SK-N-SH (cell line): ENCODE measurements at regions of chr17 and their contacts with region 1.

Region 1: GRCh38 chr17:55717898-55718735 is 4.5 kb downstream of the TMEM100 start:
- DNase-seq: peak; percentile 54
- H3K4me3 ChIP-seq: no peak overlapping the region; a peak in 1 of 4 replicates
- H3K27ac ChIP-seq: peak overlapping the region in 1 of 2 experiments; percentile 13; a peak in 1 of 4 replicates
- H3K4me1 ChIP-seq: peaks cover 2 to 8% of the 10 kb centered on the region in 2 experiments; a peak in 2 of 4 replicates
- H3K27me3 ChIP-seq: no peaks in the 10 kb centered on the region
- CTCF ChIP-seq: peak; percentile 99
- EP300 ChIP-seq: no peak
- RAD21 ChIP-seq: peak; percentile 97

Region 2: DNA sequence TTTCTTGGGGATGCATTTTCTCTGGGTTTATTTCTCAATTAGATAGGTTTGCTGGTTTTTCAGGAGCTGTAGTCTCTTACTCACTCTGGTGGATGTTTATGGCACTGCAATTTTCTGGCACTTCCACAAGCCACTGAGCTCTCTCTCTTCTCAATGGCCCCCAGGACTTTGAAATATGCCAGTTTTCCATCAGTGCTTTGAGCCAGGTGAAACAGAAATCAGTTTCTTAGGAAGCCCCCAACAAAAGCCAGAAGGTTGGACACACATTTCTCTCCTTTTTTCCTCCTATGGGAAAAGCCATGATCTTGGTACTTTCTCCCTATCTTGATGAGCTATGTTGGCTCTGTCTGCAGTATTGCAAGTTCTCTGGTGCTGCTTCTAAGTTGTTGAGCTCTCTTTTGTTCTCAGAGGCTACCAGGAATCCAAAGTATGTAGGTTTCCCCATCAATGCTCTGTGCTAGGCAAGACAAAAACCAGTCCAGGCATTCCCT is 116.2 kb before region 1 on chr17:
- CTCF ChIA-PET with region 1: interaction called, 46 read pairs
- POLR2A ChIA-PET with region 1: no interaction called
- DNase-seq: peak; percentile 52
- H3K4me3 ChIP-seq: no peak overlapping the region
- H3K27ac ChIP-seq: no peak overlapping the region
- H3K4me1 ChIP-seq: no peaks in the 10 kb centered on the region
- H3K27me3 ChIP-seq: no peaks in the 10 kb centered on the region
- CTCF ChIP-seq: peak; percentile 83
- EP300 ChIP-seq: no peak
- RAD21 ChIP-seq: peak; percentile 92

Region 3: GRCh38 chr17:55641676-55642081 is 76.4 kb before region 1 on chr17:
- CTCF ChIA-PET with region 1: interaction called, 25 read pairs
- POLR2A ChIA-PET with region 1: no interaction called
- DNase-seq: peak; percentile 49
- H3K4me3 ChIP-seq: no peak overlapping the region
- H3K27ac ChIP-seq: no peak overlapping the region
- H3K4me1 ChIP-seq: no peaks in the 10 kb centered on the region; a peak in 1 of 4 replicates
- H3K27me3 ChIP-seq: no peaks in the 10 kb centered on the region; the same call in 1 of the 2 replicates
- CTCF ChIP-seq: peak; percentile 78
- EP300 ChIP-seq: no peak
- RAD21 ChIP-seq: peak; percentile 78

Region 4: GRCh38 chr17:55660178-55660886 is 57.8 kb before region 1 on chr17:
- CTCF ChIA-PET with region 1: interaction called, 13 read pairs
- POLR2A ChIA-PET with region 1: no interaction called
- DNase-seq: no peak
- H3K4me3 ChIP-seq: no peak overlapping the region
- H3K27ac ChIP-seq: peak overlapping the region in 1 of 2 experiments; percentile 25; a peak in 1 of 4 replicates
- H3K4me1 ChIP-seq: peaks cover 12 to 30% of the 10 kb centered on the region in 2 experiments; a peak in 3 of 4 replicates
- H3K27me3 ChIP-seq: no peaks in the 10 kb centered on the region
- CTCF ChIP-seq: no peak
- EP300 ChIP-seq: no peak
- RAD21 ChIP-seq: no peak

Region 5: GRCh38 chr17:55705849-55706248 is 12.3 kb before region 1 on chr17:
- CTCF ChIA-PET with region 1: interaction called, 42 read pairs
- POLR2A ChIA-PET with region 1: interaction called, 3 read pairs
- DNase-seq: no peak
- H3K4me3 ChIP-seq: no peak overlapping the region
- H3K27ac ChIP-seq: no peak overlapping the region; a peak in 1 of 4 replicates
- H3K4me1 ChIP-seq: peaks cover 0 to 18% of the 10 kb centered on the region in 2 experiments; a peak in 2 of 4 replicates
- H3K27me3 ChIP-seq: peaks cover 7% of the 10 kb centered on the region; the same call in 1 of the 2 replicates
- CTCF ChIP-seq: no peak
- EP300 ChIP-seq: no peak
- RAD21 ChIP-seq: no peak